CD4-positive, alpha-beta T cell (primary cell): ENCODE measurements at regions of chr19 and their contacts with region 1.

Region 1: GRCh38 chr19:35648017-35648961 is at the start of gene COX6B1:
- DNase-seq: peak; percentile 80 to 98 (median 86)
- ATAC-seq: peak; percentile 74
- H3K4me3 ChIP-seq: peak within 1 kb of the TSS; percentile 82
- H3K4me3 Mint-ChIP-seq: peak within 1 kb of the TSS; percentile 99
- H3K27ac ChIP-seq: peak within 1 kb of the TSS; percentile 42 to 63
- H3K27ac Mint-ChIP-seq: peak within 1 kb of the TSS; percentile 99
- H3K4me1 ChIP-seq: peaks cover 60% of the 10 kb centered on the region
- H3K4me1 Mint-ChIP-seq: peaks cover 53% of the 10 kb centered on the region
- H3K27me3 ChIP-seq: no peaks in the 10 kb centered on the region
- H3K27me3 Mint-ChIP-seq: no peaks in the 10 kb centered on the region
- CTCF ChIP-seq: no peak
- total RNA-seq, gene COX6B1: 136 to 144 TPM

Region 2: GRCh38 chr19:35545001-35545911 is 103.0 kb before region 1 on chr19 and contains the start of gene TMEM147:
- CTCF ChIA-PET with region 1: no interaction called
- POLR2A ChIA-PET with region 1: no interaction called
- intact Hi-C with region 1: loop called in 1 of 2 experiments (anchors 5 kb)
- DNase-seq: peak; percentile 45 to 86 (median 73)
- ATAC-seq: peak; percentile 85
- H3K4me3 ChIP-seq: peak within 1 kb of the TSS; percentile 93
- H3K4me3 Mint-ChIP-seq: peak within 1 kb of the TSS; percentile 94
- H3K27ac ChIP-seq: peak within 1 kb of the TSS; percentile 64 to 90
- H3K27ac Mint-ChIP-seq: peak within 1 kb of the TSS; percentile 93
- H3K4me1 ChIP-seq: peaks cover 40% of the 10 kb centered on the region
- H3K4me1 Mint-ChIP-seq: peaks cover 36% of the 10 kb centered on the region
- H3K27me3 ChIP-seq: no peaks in the 10 kb centered on the region
- H3K27me3 Mint-ChIP-seq: no peaks in the 10 kb centered on the region
- CTCF ChIP-seq: no peak
- total RNA-seq, gene TMEM147: 20.3 to 22.0 TPM

Region 3: GRCh38 chr19:35628565-35629331 is 19.5 kb before region 1 on chr19 and contains the start of gene RBM42:
- CTCF ChIA-PET with region 1: no interaction called
- POLR2A ChIA-PET with region 1: interaction called, 5 read pairs
- intact Hi-C with region 1: loop called (anchors 1 to 2 kb)
- DNase-seq: peak; percentile 89 to 99 (median 95)
- ATAC-seq: peak; percentile 99
- H3K4me3 ChIP-seq: peak within 1 kb of the TSS; percentile 87
- H3K4me3 Mint-ChIP-seq: peak within 1 kb of the TSS; percentile 99
- H3K27ac ChIP-seq: peak within 1 kb of the TSS; percentile 81 to 90
- H3K27ac Mint-ChIP-seq: peak within 1 kb of the TSS; percentile 89
- H3K4me1 ChIP-seq: peaks cover 23% of the 10 kb centered on the region
- H3K4me1 Mint-ChIP-seq: peaks cover 29% of the 10 kb centered on the region
- H3K27me3 ChIP-seq: no peaks in the 10 kb centered on the region
- H3K27me3 Mint-ChIP-seq: no peaks in the 10 kb centered on the region
- CTCF ChIP-seq: no peak
- total RNA-seq, gene RBM42: 45.7 to 48.8 TPM

Region 4: GRCh38 chr19:35740423-35741202 is 92.3 kb after region 1 on chr19:
- CTCF ChIA-PET with region 1: interaction called, 4 read pairs
- POLR2A ChIA-PET with region 1: interaction called, 17 read pairs
- intact Hi-C with region 1: loop called in 1 of 2 experiments (anchors 5 kb)
- DNase-seq: peak; percentile 88 to 97 (median 94)
- ATAC-seq: peak; percentile 60
- H3K4me3 ChIP-seq: peak overlapping the region; percentile 91
- H3K4me3 Mint-ChIP-seq: peak overlapping the region; percentile 99
- H3K27ac ChIP-seq: peak overlapping the region; percentile 62 to 72
- H3K27ac Mint-ChIP-seq: peak overlapping the region; percentile 98
- H3K4me1 ChIP-seq: peaks cover 68% of the 10 kb centered on the region
- H3K4me1 Mint-ChIP-seq: peaks cover 52% of the 10 kb centered on the region
- H3K27me3 ChIP-seq: no peaks in the 10 kb centered on the region
- H3K27me3 Mint-ChIP-seq: no peaks in the 10 kb centered on the region
- CTCF ChIP-seq: no peak

Region 5: GRCh38 chr19:35757749-35758608 is 109.7 kb after region 1 on chr19 and contains the start of gene PROSER3:
- CTCF ChIA-PET with region 1: no interaction called
- POLR2A ChIA-PET with region 1: no interaction called
- intact Hi-C with region 1: loop called (anchors 5 kb)
- DNase-seq: peak; percentile 95 to 100 (median 98)
- ATAC-seq: peak; percentile 96
- H3K4me3 ChIP-seq: peak within 1 kb of the TSS; percentile 81
- H3K4me3 Mint-ChIP-seq: peak within 1 kb of the TSS; percentile 99
- H3K27ac ChIP-seq: peak within 1 kb of the TSS; percentile 61 to 97
- H3K27ac Mint-ChIP-seq: peak within 1 kb of the TSS; percentile 88
- H3K4me1 ChIP-seq: peaks cover 43% of the 10 kb centered on the region
- H3K4me1 Mint-ChIP-seq: peaks cover 41% of the 10 kb centered on the region
- H3K27me3 ChIP-seq: peaks cover 0 to 2% of the 10 kb centered on the region in 2 experiments
- H3K27me3 Mint-ChIP-seq: peaks cover 15% of the 10 kb centered on the region
- CTCF ChIP-seq: no peak
- total RNA-seq, gene PROSER3: 19.4 to 22.6 TPM